Calu3 (cell line): ENCODE measurements at regions of chr1 and their contacts with region 1.

Region 1: DNA sequence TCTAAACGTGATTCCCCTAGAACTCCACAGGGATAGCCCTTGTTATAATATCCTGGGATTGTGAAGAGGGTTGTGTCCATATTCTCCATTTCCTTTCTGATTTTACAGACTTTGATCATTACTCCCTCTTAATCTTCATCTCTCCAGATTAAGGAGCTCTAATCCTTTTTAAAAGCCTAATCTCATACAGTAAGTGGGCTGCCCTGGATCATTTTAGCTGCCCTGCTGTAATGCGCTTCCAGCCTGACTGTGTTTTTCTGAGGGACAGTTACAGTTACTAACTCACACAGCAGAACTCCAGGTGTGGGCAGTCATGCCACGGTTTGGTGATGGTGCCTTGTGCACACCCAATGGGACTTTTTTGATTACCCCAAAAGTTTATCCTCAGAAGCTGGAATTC is 33.5 kb downstream of the PROX1 start:
- DNase-seq: no peak
- H3K4me3 Mint-ChIP-seq: no peak overlapping the region
- H3K27ac Mint-ChIP-seq: no peak overlapping the region
- H3K4me1 Mint-ChIP-seq: no peaks in the 10 kb centered on the region
- H3K27me3 Mint-ChIP-seq: peaks cover 91% of the 10 kb centered on the region
- CTCF ChIP-seq: no peak

Region 2: DNA sequence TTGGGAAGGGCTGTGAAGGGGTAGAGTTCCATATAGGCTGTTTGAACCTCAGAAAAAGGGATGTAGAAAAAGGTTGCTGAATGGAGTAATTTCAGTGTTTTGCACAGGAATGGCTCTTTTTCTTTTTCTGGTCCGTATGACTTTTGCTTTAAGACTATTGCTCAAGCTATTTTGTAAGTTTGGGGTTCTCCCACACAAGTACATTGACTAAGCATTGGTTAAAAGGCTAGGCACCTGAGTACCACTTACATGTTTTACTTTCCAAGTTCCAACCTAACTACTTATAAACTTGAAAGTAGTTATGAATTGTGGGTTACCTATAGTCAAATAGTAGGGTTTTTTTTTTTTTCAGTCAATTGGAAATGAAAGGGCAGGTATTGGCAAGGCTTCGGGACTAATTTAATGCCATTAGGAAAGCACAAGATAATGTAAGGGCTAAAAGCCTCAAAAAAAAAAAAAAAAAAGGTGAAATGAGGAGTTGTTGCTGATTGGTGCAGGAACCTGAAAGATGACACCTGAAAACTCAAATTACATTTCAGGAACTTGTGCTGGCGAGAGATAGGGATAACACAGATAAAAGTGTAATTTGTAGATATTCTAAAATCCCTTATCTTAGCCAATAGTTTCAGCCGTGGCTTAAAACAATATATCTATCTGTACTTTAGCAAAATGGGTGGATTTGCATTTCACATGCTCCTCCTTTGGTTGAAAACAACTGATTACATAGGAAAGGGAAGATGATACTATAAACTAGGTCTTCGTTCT is 760.8 kb before region 1 on chr1:
- CTCF ChIA-PET with region 1: interaction called, 10 read pairs
- intact Hi-C with region 1: no loop called
- DNase-seq: no peak
- H3K4me3 Mint-ChIP-seq: no peak overlapping the region
- H3K27ac Mint-ChIP-seq: no peak overlapping the region
- H3K4me1 Mint-ChIP-seq: no peaks in the 10 kb centered on the region
- H3K27me3 Mint-ChIP-seq: no peaks in the 10 kb centered on the region
- CTCF ChIP-seq: no peak